CD4-positive, alpha-beta T cell (primary cell): ENCODE measurements at regions of chr2 and their contacts with region 1.

Region 1: DNA sequence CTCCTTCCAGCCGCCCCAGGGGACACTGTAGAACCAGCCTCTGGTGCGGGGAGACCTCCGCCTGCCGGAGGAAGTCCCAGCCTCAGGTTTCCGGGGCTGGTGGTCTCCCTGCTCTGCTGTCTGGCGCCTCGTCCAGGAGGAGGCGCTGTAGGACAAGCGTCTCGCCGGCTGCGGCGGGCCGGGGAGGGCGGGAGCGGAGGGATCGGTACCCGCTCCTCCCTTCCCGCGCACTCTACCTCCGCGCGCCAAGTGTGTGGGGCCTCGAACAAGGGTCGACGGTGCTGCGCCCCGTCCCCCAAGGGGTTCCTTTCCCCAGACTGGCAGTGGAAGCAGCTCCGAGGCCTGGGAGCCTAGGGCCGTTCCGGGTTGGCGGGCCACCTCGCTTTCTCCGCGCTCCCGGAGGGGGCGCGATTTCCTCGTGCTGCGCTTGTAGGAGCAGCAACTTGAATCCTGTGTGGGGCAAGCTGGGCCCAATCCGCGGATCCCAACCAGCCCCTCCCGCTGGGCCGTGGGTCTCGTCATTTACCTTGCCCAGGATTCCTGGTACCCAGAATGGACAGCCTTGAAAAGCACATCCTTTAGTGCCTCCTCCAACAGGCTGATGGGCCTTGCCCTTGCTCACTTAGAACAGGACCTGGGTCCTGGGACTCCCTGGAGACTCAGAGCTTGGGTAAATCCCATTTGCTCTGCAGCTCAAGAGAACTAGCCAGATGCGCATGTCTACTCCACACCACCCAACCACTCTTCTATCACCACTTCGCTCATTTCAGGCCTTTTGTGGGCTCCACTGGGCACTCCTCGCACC is 10.6 kb upstream of the HOXD4 start:
- DNase-seq: peak; percentile 15 to 79 (median 50)
- ATAC-seq: peak; percentile 88
- H3K4me3 ChIP-seq: peak overlapping the region; percentile 29
- H3K4me3 Mint-ChIP-seq: peak overlapping the region; percentile 39
- H3K27ac ChIP-seq: no peak overlapping the region
- H3K27ac Mint-ChIP-seq: no peak overlapping the region
- H3K4me1 ChIP-seq: peaks cover 35% of the 10 kb centered on the region
- H3K4me1 Mint-ChIP-seq: peaks cover 35% of the 10 kb centered on the region
- H3K27me3 ChIP-seq: peaks cover 85 to 98% of the 10 kb centered on the region in 2 experiments
- H3K27me3 Mint-ChIP-seq: peaks cover 95% of the 10 kb centered on the region
- CTCF ChIP-seq: peak; percentile 35

Region 2: GRCh38 chr2:176454893-176455811 is 314.4 kb after region 1 on chr2:
- CTCF ChIA-PET with region 1: interaction called, 3 read pairs
- POLR2A ChIA-PET with region 1: interaction called, 3 read pairs
- intact Hi-C with region 1: loop called (anchors 5 kb)
- DNase-seq: peak; percentile 54 to 85 (median 72)
- ATAC-seq: peak; percentile 76
- H3K4me3 ChIP-seq: no peak overlapping the region
- H3K4me3 Mint-ChIP-seq: no peak overlapping the region
- H3K27ac ChIP-seq: no peak overlapping the region
- H3K27ac Mint-ChIP-seq: no peak overlapping the region
- H3K4me1 ChIP-seq: no peaks in the 10 kb centered on the region
- H3K4me1 Mint-ChIP-seq: no peaks in the 10 kb centered on the region
- H3K27me3 ChIP-seq: peaks cover 9 to 47% of the 10 kb centered on the region in 2 experiments
- H3K27me3 Mint-ChIP-seq: peaks cover 67% of the 10 kb centered on the region
- CTCF ChIP-seq: peak; percentile 84